ENCODE measurements at regions of chr1 and their contacts with region 1.

Region 1: DNA sequence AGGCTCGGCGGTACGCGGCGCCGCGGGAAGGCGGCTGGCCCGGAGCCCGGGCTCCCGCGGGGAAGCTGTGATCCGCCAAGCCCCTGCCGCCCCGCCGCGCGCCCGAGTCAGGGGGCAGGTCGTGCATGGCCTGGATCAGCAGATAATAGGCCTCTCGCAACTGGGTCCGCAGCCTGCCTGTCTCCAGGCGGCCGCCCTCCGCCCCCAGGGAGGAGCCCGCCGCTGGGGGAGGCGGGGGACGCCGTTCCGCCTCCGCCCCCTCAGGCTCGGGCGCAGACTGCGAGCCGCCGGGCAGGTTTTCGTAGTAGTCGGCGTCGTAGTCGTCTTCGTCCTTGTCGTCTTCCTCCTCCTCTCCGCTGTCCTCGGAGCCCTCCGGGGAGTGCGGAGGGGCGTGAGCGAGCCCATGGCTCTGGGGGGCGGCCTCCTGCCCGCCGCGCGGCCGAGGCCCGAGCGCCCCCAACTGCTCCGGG is at the start of gene SYDE2:
- DNase-seq: peak; percentile 79 to 89 (median 82)
- ATAC-seq: peak; percentile 84 to 95 (median 94)
- H3K4me3 ChIP-seq: peak within 1 kb of the TSS; percentile 59 to 85 (median 73)
- H3K27ac ChIP-seq: peak within 1 kb of the TSS; percentile 77 to 99 (median 94)
- H3K4me1 ChIP-seq: peaks cover 0 to 18% (median 4%) of the 10 kb centered on the region in 12 donors
- H3K27me3 ChIP-seq: peaks cover 0 to 53% (median 8%) of the 10 kb centered on the region in 9 donors
- CTCF ChIP-seq: no peak
- POLR2A ChIP-seq: peak in 1 of 2 donors; percentile 60
- total RNA-seq, gene SYDE2: 15.1 to 25.8 (median 23.0) TPM

Region 2: DNA sequence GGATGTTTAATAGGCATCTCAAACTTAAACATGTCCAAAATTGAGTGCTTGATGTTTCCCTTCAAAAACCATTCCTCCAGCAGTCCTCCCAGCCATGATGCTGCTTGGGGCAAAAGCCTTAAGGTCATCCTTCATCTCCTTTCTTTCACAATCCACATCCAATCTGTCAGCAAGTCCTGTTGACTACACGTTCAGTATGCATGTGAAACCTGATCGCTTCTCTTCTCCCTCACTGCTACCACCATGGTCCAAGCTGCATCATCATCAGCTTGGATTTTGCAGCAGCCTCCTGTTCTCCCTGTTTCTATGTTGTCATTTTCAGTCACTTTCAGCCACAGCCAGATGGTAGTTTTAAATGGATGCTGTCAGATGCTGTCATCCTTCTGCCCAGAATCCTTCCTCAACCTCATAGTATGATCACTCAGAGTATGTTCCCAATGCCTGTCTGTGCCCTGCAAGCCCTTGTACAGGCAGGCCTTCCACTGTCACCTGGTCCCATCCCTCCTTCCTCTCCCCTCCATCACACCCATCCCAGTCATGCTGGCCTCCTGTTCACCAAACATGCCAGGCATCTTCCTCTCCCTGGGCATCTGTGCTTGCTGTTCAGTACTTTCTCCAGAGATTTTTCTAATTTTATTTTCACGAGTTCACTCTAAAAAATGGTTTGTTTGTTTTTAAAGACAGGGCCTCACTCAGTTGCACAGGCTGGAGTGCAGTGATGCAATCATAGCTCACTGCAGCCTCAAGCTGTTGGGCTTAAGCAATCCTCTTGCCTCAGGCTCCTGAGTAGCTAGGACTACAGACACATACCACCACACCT is 66.1 kb before region 1 on chr1:
- intact Hi-C with region 1: loop called in 1 of 10 experiments (anchors 5 kb)
- DNase-seq: no peak
- ATAC-seq: no peak
- H3K4me3 ChIP-seq: no peak overlapping the region
- H3K27ac ChIP-seq: no peak overlapping the region
- H3K4me1 ChIP-seq: peaks cover 0 to 31% (median 0%) of the 10 kb centered on the region in 12 donors
- H3K27me3 ChIP-seq: no peaks in the 10 kb centered on the region
- CTCF ChIP-seq: no peak
- POLR2A ChIP-seq: no peak

Region 3: DNA sequence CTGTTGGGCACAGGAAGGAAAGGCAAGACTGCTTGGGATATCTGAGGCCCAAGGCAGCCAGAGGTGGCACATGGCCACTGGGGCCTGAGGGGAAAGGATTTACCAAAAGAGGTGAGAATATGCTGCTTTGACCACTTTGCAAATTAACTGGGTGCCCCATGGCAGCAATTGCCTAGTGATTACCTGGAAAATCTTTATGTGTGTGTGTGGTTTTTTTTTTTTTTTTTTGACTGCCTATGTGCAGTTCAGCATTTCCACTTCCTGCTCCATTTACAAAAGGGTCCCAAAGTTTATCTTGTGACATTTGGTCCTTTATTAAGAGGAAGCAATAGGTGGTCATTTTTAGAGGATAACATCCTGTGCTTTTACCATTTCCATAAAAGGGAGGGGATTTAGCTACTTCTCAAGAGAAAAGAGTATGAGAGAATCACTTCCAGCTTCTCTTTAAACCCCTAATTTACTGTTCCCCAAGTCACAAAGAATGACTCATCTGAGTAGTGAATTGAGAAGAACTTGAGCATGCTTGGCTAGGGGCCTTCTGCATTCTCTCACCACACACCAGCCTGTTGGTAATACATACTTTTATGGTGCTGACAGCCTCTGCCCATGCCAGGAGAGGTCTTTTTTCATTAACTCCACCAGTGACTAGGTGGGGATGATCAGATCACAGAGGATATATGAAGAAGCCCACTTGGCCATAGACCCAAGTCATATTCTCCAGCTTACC is 52.2 kb before region 1 on chr1:
- intact Hi-C with region 1: loop called in 1 of 10 experiments (anchors 10 kb)
- DNase-seq: peak in 3 of 5 donors; percentile 40 to 50 (median 43)
- ATAC-seq: peak; percentile 71 to 84 (median 80)
- H3K4me3 ChIP-seq: no peak overlapping the region
- H3K27ac ChIP-seq: peak overlapping the region in 5 of 12 donors; percentile 27 to 59 (median 41)
- H3K4me1 ChIP-seq: peaks cover 0 to 37% (median 3%) of the 10 kb centered on the region in 12 donors
- H3K27me3 ChIP-seq: no peaks in the 10 kb centered on the region
- CTCF ChIP-seq: no peak
- POLR2A ChIP-seq: no peak

Region 4: GRCh38 chr1:85172684-85173337 is 28.1 kb before region 1 on chr1:
- intact Hi-C with region 1: no loop called
- DNase-seq: no peak
- ATAC-seq: no peak
- H3K4me3 ChIP-seq: no peak overlapping the region
- H3K27ac ChIP-seq: no peak overlapping the region
- H3K4me1 ChIP-seq: no peaks in the 10 kb centered on the region
- H3K27me3 ChIP-seq: no peaks in the 10 kb centered on the region
- CTCF ChIP-seq: no peak
- POLR2A ChIP-seq: no peak

Region 5: GRCh38 chr1:85224734-85225623 is 24.1 kb after region 1 on chr1:
- intact Hi-C with region 1: loop called in 2 of 10 experiments (anchors 2 kb)
- DNase-seq: peak in 3 of 5 donors; percentile 32 to 58 (median 44)
- ATAC-seq: peak; percentile 80 to 91 (median 84)
- H3K4me3 ChIP-seq: no peak overlapping the region
- H3K27ac ChIP-seq: peak overlapping the region; percentile 46 to 85 (median 75)
- H3K4me1 ChIP-seq: peaks cover 0 to 29% (median 13%) of the 10 kb centered on the region in 12 donors
- H3K27me3 ChIP-seq: no peaks in the 10 kb centered on the region
- CTCF ChIP-seq: no peak
- POLR2A ChIP-seq: no peak

Region 6: GRCh38 chr1:85240174-85240601 is 39.3 kb after region 1 on chr1:
- intact Hi-C with region 1: loop called in 1 of 10 experiments (anchors 5 kb)
- DNase-seq: peak in 1 of 5 donors; percentile 32
- ATAC-seq: peak in 2 of 4 donors; percentile 43 to 78
- H3K4me3 ChIP-seq: no peak overlapping the region
- H3K27ac ChIP-seq: peak overlapping the region in 1 of 12 donors; percentile 46
- H3K4me1 ChIP-seq: peaks cover 0 to 15% (median 0%) of the 10 kb centered on the region in 12 donors
- H3K27me3 ChIP-seq: no peaks in the 10 kb centered on the region
- CTCF ChIP-seq: peak in 5 of 12 donors; percentile 15 to 35 (median 29)
- POLR2A ChIP-seq: no peak

Region 7: GRCh38 chr1:85259118-85259911 is 58.4 kb after region 1 on chr1 and contains the start of gene C1orf52:
- intact Hi-C with region 1: loop called in 3 of 10 experiments (anchors 2 to 5 kb)
- DNase-seq: peak; percentile 95 to 98 (median 96)
- ATAC-seq: peak; percentile 97 to 98 (median 98)
- H3K4me3 ChIP-seq: peak within 1 kb of the TSS; percentile 66 to 98 (median 88)
- H3K27ac ChIP-seq: peak within 1 kb of the TSS; percentile 80 to 96 (median 88)
- H3K4me1 ChIP-seq: peaks cover 0 to 40% (median 33%) of the 10 kb centered on the region in 12 donors
- H3K27me3 ChIP-seq: no peaks in the 10 kb centered on the region
- CTCF ChIP-seq: peak; percentile 96 to 100 (median 99)
- POLR2A ChIP-seq: peak in 1 of 2 donors; percentile 68
- total RNA-seq, gene C1orf52: 11.4 to 23.2 (median 17.0) TPM

Region 8: DNA sequence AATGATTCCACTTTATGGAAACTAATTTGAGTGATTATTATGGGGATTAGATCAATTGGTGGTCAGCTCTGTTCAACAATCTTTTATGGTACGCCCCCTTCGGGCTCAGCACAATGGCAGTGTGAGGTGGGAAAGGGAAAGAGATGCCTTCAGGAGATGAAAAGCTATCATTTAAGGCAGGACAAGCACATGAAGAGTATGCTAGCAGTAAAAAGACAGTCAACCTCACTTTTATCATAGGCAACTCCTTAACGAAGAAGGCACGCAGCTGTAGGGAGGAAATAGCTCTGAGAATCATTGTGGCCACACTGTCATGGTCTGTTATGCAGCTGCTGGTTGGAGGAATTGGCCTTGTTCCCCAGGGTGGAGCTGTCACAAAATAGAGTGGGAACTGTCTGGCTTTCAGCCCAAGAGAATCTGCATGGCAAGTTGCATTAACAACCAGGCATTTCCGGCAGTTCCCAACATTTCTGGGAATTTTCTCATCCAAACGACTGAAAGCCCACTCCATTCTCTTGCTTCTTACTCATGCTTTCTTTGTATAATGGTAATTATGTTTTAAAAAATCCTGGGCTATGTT is 129.9 kb after region 1 on chr1:
- intact Hi-C with region 1: no loop called
- DNase-seq: peak in 4 of 5 donors; percentile 67 to 83 (median 78)
- ATAC-seq: peak; percentile 58 to 90 (median 82)
- H3K4me3 ChIP-seq: no peak overlapping the region
- H3K27ac ChIP-seq: peak overlapping the region; percentile 35 to 90 (median 80)
- H3K4me1 ChIP-seq: peaks cover 12 to 44% (median 28%) of the 10 kb centered on the region in 12 donors
- H3K27me3 ChIP-seq: no peaks in the 10 kb centered on the region
- CTCF ChIP-seq: no peak
- POLR2A ChIP-seq: no peak